ENCODE measurements at regions of chr10 and their contacts with region 1.

Region 1: GRCh38 chr10:119139464-119140067 is 25.9 kb downstream of the SFXN4 start:
- DNase-seq: peak; percentile 35
- ATAC-seq: peak; percentile 61
- H3K4me3 ChIP-seq: no peak overlapping the region
- H3K27ac ChIP-seq: no peak overlapping the region
- H3K4me1 ChIP-seq: peaks cover 4% of the 10 kb centered on the region; the same call in 1 of the 2 replicates
- H3K27me3 ChIP-seq: no peaks in the 10 kb centered on the region
- CTCF ChIP-seq: peak; percentile 66
- POLR2A ChIP-seq: no peak
- RAD21 ChIP-seq: peak; percentile 80

Region 2: GRCh38 chr10:119070395-119071165 is 69.0 kb before region 1 on chr10:
- CTCF ChIA-PET with region 1: no interaction called
- POLR2A ChIA-PET with region 1: no interaction called
- dilution Hi-C with region 1: no loop called
- in situ Hi-C with region 1: no loop called
- intact Hi-C with region 1: no loop called
- DNase-seq: no peak
- ATAC-seq: no peak
- H3K4me3 ChIP-seq: no peak overlapping the region
- H3K27ac ChIP-seq: no peak overlapping the region
- H3K4me1 ChIP-seq: peaks cover 2% of the 10 kb centered on the region; the same call in 1 of the 2 replicates
- H3K27me3 ChIP-seq: no peaks in the 10 kb centered on the region
- CTCF ChIP-seq: no peak
- POLR2A ChIP-seq: no peak
- RAD21 ChIP-seq: no peak

Region 3: GRCh38 chr10:119165171-119166110 is 25.9 kb after region 1 on chr10 and contains the start of gene SFXN4:
- CTCF ChIA-PET with region 1: no interaction called
- POLR2A ChIA-PET with region 1: interaction called, 11 read pairs
- dilution Hi-C with region 1: no loop called
- in situ Hi-C with region 1: no loop called
- intact Hi-C with region 1: no loop called
- DNase-seq: peak; percentile 24
- ATAC-seq: peak; percentile 93
- H3K4me3 ChIP-seq: peak within 1 kb of the TSS; percentile 90
- H3K27ac ChIP-seq: peak within 1 kb of the TSS; percentile 88
- H3K4me1 ChIP-seq: peaks cover 7% of the 10 kb centered on the region
- H3K27me3 ChIP-seq: no peaks in the 10 kb centered on the region
- CTCF ChIP-seq: no peak
- POLR2A ChIP-seq: no peak
- RAD21 ChIP-seq: no peak
- total RNA-seq, gene SFXN4: 10.6 and 12.0 TPM in 2 replicates

Region 4: GRCh38 chr10:119189811-119190282 is 50.3 kb after region 1 on chr10:
- CTCF ChIA-PET with region 1: interaction called, 4 read pairs
- POLR2A ChIA-PET with region 1: interaction called, 23 read pairs
- dilution Hi-C with region 1: no loop called
- in situ Hi-C with region 1: no loop called
- intact Hi-C with region 1: no loop called
- DNase-seq: peak; percentile 95
- ATAC-seq: peak; percentile 65
- H3K4me3 ChIP-seq: no peak overlapping the region
- H3K27ac ChIP-seq: peak overlapping the region; percentile 68
- H3K4me1 ChIP-seq: 0 out of 2 replicates have a peak, but pooled peaks cover 4% of the 10 kb centered on the region
- H3K27me3 ChIP-seq: no peaks in the 10 kb centered on the region
- CTCF ChIP-seq: no peak
- POLR2A ChIP-seq: no peak
- RAD21 ChIP-seq: no peak

Region 5: GRCh38 chr10:119445311-119445934 is 305.9 kb after region 1 on chr10:
- CTCF ChIA-PET with region 1: no interaction called
- POLR2A ChIA-PET with region 1: no interaction called
- dilution Hi-C with region 1: no loop called
- in situ Hi-C with region 1: no loop called
- intact Hi-C with region 1: loop called (anchors 5 kb)
- DNase-seq: peak; percentile 74
- ATAC-seq: peak; percentile 74
- H3K4me3 ChIP-seq: no peak overlapping the region
- H3K27ac ChIP-seq: no peak overlapping the region
- H3K4me1 ChIP-seq: peaks cover 9% of the 10 kb centered on the region; the same call in 1 of the 2 replicates
- H3K27me3 ChIP-seq: no peaks in the 10 kb centered on the region
- CTCF ChIP-seq: peak; percentile 86
- POLR2A ChIP-seq: no peak
- RAD21 ChIP-seq: peak; percentile 86

Measured in IMR-90 (cell line).